Heart right ventricle (tissue), 16 donors: ENCODE measurements at regions of chr11 and their contacts with region 1.

Region 1: DNA sequence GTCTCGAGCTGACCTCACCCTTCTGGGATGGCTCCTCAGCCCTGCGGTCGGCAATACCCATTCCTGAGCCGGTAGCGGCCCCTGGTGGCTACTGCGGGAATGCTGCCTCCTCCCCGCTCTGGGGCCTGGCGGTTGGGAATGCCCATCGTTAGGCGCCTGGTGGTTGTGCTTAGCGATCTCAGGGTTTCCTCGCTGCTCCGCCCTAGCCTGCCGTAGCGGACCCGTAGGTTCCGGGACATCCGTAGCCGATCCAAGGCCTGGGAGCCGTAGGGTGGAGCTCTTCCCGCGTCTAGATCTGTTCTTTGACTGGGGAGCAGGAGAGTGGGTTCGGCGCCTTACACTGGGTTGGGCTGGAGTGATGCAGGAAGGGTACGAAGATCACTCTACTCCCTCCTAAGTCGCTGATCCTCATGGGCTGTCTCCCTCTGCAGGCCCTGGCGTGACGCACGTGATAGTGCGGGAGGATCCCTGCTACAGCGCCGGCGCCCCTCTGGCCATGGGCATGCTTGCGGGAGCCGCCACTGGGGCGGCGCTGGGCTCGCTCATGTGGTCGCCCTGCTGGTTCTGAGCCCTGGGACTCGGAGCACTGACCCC is 14.8 kb downstream of the PLEKHB1 start:
- DNase-seq: peak; percentile 90 to 94
- ATAC-seq: peak; percentile 93 to 98 (median 97)
- H3K4me3 ChIP-seq: peak overlapping the region in 9 of 10 donors; percentile 3 to 52 (median 41)
- H3K27ac ChIP-seq: peak overlapping the region in 2 of 10 donors; percentile 22 to 39
- H3K4me1 ChIP-seq: peaks cover 6 to 47% (median 32%) of the 10 kb centered on the region in 9 donors
- H3K27me3 ChIP-seq: no peaks in the 10 kb centered on the region
- CTCF ChIP-seq: peak; percentile 92 to 99 (median 97)

Region 2: GRCh38 chr11:73625696-73626318 is 35.3 kb before region 1 on chr11:
- intact Hi-C with region 1: loop called in 8 of 10 experiments (anchors 1 to 5 kb)
- DNase-seq: peak; percentile 50 to 79
- ATAC-seq: peak; percentile 72 to 89 (median 85)
- H3K4me3 ChIP-seq: peak overlapping the region in 2 of 10 donors; percentile 10 to 13
- H3K27ac ChIP-seq: no peak overlapping the region
- H3K4me1 ChIP-seq: peaks cover 0 to 36% (median 11%) of the 10 kb centered on the region in 9 donors
- H3K27me3 ChIP-seq: no peaks in the 10 kb centered on the region
- CTCF ChIP-seq: peak; percentile 92 to 97 (median 95)